B cell (primary cell): ENCODE measurements at regions of chr12 and their contacts with region 1.

Region 1: GRCh38 chr12:53508534-53509199 is 1.4 kb upstream of the NPFF start:
- DNase-seq: peak; percentile 87
- ATAC-seq: peak; percentile 100
- H3K4me3 ChIP-seq: no peak overlapping the region
- H3K4me3 Mint-ChIP-seq: no peak overlapping the region
- H3K27ac ChIP-seq: peak overlapping the region; percentile 30 to 31
- H3K27ac Mint-ChIP-seq: peak overlapping the region; percentile 64
- H3K4me1 ChIP-seq: peaks cover 6 to 8% of the 10 kb centered on the region in 2 donors
- H3K4me1 Mint-ChIP-seq: peaks cover 10% of the 10 kb centered on the region
- H3K27me3 ChIP-seq: no peaks in the 10 kb centered on the region
- H3K27me3 Mint-ChIP-seq: no peaks in the 10 kb centered on the region
- CTCF ChIP-seq: peak; percentile 95

Region 2: DNA sequence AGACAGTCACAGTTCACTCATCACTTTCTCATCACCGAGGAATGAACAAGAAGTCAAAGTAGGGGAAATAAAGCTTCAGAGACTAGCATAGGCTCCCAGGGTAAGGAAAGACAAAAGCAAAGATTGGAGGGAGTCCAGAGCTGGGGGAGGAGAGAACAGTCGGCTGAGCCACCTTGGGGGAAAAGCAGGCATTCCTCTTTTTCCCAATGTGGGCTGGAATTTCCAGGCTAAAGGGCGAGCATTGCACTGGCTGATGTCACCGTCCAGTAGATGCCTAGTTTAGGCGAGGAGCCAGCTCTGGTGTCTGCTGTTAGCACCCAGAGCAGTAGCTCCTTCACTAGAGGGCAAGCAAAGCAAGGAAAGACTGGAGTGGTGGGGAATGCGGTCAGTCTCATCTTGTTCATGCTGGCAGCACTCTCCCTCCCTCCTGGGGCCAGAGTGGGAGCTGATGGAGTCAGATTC is 1066.0 kb before region 1 on chr12:
- CTCF ChIA-PET with region 1: no interaction called
- POLR2A ChIA-PET with region 1: no interaction called
- intact Hi-C with region 1: no loop called
- DNase-seq: no peak
- ATAC-seq: no peak
- H3K4me3 ChIP-seq: no peak overlapping the region
- H3K4me3 Mint-ChIP-seq: no peak overlapping the region
- H3K27ac ChIP-seq: no peak overlapping the region
- H3K27ac Mint-ChIP-seq: no peak overlapping the region
- H3K4me1 ChIP-seq: no peaks in the 10 kb centered on the region
- H3K4me1 Mint-ChIP-seq: no peaks in the 10 kb centered on the region
- H3K27me3 ChIP-seq: peaks cover 0 to 3% (median 0%) of the 10 kb centered on the region in 4 experiments
- H3K27me3 Mint-ChIP-seq: peaks cover 35% of the 10 kb centered on the region
- CTCF ChIP-seq: no peak

Region 3: DNA sequence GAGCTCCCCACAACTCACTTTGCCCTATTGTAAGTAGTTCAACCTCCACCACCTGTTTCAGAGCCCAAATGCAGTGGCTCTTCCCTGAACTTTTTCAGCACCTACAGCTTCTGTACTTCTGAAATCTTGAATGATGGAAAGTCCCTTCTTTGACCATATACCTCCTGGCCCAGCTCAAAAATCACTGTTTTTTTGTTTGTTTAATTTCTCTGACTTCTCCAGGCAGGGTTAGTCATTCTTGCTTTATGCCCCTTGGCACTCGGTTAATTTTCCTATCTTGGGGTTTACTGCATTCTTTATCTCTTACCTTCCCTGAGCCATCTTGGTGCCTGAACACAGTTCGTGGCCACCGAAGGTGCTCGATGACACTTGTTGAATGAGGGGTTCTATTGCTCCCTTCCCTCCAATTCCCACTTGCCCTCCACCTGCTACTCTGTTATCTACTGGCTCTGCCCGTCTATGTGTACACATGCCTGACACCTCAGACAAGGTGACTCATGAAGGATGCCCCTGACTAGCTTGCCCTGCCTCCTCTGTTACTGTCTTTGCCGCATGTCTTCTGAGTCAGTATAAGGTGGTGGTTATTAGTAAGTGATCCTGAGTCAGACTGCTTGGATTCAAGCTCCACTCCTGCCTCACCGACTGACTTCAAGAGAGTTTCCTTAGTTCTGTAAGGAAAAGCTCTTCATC is 80.6 kb before region 1 on chr12:
- CTCF ChIA-PET with region 1: interaction called, 41 read pairs
- POLR2A ChIA-PET with region 1: no interaction called
- intact Hi-C with region 1: no loop called
- DNase-seq: no peak
- ATAC-seq: no peak
- H3K4me3 ChIP-seq: no peak overlapping the region
- H3K4me3 Mint-ChIP-seq: no peak overlapping the region
- H3K27ac ChIP-seq: no peak overlapping the region
- H3K27ac Mint-ChIP-seq: no peak overlapping the region
- H3K4me1 ChIP-seq: no peaks in the 10 kb centered on the region
- H3K4me1 Mint-ChIP-seq: no peaks in the 10 kb centered on the region
- H3K27me3 ChIP-seq: no peaks in the 10 kb centered on the region
- H3K27me3 Mint-ChIP-seq: no peaks in the 10 kb centered on the region
- CTCF ChIP-seq: no peak

Region 4: DNA sequence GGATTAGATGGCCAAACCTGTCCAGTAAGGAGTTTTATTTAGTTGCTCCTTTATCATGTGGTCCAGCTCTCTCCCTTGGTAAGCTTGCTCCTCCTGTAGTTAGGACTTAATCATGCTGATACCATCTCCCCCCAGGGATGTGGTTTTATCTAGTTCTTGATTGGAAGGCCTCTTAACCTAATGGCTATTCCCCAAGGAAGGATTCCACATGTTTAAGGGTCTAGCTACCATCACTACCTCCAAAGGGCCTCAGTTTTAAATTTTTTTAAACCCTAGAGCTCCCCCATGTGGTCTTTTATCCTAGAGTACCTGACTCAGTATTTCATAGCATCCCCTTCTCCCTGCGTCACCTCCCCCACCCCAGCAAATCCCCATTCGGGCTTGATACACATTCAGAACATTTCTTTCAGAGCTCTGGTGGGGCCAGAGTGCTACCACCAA is 31.9 kb before region 1 on chr12:
- CTCF ChIA-PET with region 1: interaction called, 29 read pairs
- POLR2A ChIA-PET with region 1: interaction called, 4 read pairs
- intact Hi-C with region 1: loop called (anchors 5 kb)
- DNase-seq: peak; percentile 39
- ATAC-seq: no peak
- H3K4me3 ChIP-seq: no peak overlapping the region
- H3K4me3 Mint-ChIP-seq: no peak overlapping the region
- H3K27ac ChIP-seq: no peak overlapping the region
- H3K27ac Mint-ChIP-seq: peak overlapping the region; percentile 26
- H3K4me1 ChIP-seq: no peaks in the 10 kb centered on the region
- H3K4me1 Mint-ChIP-seq: peaks cover 3% of the 10 kb centered on the region
- H3K27me3 ChIP-seq: no peaks in the 10 kb centered on the region
- H3K27me3 Mint-ChIP-seq: no peaks in the 10 kb centered on the region
- CTCF ChIP-seq: peak; percentile 31

Region 5: DNA sequence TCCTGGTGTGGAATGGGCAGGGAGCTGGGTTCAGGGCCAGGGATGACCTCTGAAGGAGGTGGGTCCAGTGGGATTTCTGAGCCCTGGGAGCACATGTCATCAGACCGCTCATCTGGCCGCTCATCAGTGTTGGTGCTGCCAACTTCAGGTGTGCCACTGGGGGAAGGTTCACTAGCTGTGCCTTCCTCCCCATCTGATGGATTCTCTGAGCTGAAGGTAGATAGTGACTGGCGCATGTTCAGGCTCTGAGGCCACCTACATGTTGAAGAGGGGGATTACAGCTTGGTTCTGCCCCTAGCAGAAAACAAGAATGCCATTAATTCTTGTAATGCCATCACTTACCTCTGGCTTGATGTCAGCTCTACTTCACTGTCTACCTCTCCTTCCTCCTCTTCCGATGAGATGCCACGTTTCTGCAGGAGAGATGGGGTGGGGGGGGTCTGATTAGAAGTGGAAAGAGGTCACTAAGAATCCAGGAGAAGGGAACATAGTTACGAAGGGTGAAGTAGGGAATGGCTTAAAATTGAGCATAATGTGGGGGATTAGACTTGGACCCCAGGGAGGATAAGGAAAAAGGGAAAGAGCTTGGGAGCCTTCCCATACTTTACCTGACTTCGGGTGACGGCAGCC is 26.6 kb before region 1 on chr12:
- CTCF ChIA-PET with region 1: interaction called, 29 read pairs
- POLR2A ChIA-PET with region 1: no interaction called
- intact Hi-C with region 1: no loop called
- DNase-seq: peak; percentile 44
- ATAC-seq: peak; percentile 35
- H3K4me3 ChIP-seq: no peak overlapping the region
- H3K4me3 Mint-ChIP-seq: no peak overlapping the region
- H3K27ac ChIP-seq: peak overlapping the region in 1 of 2 donors; percentile 23
- H3K27ac Mint-ChIP-seq: no peak overlapping the region
- H3K4me1 ChIP-seq: no peaks in the 10 kb centered on the region
- H3K4me1 Mint-ChIP-seq: peaks cover 4% of the 10 kb centered on the region
- H3K27me3 ChIP-seq: no peaks in the 10 kb centered on the region
- H3K27me3 Mint-ChIP-seq: no peaks in the 10 kb centered on the region
- CTCF ChIP-seq: peak; percentile 39